ENCODE measurements at regions of chr2 and their contacts with region 1.

Region 1: DNA sequence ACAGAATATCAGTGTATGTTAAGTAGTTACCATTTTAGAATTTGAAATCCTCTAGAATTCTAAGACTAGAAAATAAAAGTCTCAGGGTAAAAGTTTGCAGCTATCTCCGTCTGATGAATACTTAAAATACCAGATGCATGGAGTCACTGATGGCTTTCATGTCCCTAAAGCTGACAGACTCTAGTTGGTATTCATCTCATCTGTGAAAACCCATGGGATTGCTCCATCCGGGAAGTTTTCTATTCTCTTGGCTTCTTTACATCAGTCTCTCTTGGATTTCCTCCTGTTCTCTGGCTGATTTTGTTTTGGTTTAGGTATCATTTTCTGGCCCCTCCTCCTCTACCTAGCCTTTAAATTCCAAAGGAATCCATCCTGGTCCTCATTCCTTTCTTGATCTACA is 465.6 kb upstream of the POU3F3 start:
- DNase-seq: no peak
- H3K4me3 ChIP-seq: no peak overlapping the region
- H3K27ac ChIP-seq: no peak overlapping the region
- H3K4me1 ChIP-seq: no peaks in the 10 kb centered on the region
- H3K27me3 ChIP-seq: peaks cover 0 to 3% (median 0%) of the 10 kb centered on the region in 4 donors
- CTCF ChIP-seq: no peak
- EP300 ChIP-seq: no peak
- POLR2A ChIP-seq: no peak

Region 2: DNA sequence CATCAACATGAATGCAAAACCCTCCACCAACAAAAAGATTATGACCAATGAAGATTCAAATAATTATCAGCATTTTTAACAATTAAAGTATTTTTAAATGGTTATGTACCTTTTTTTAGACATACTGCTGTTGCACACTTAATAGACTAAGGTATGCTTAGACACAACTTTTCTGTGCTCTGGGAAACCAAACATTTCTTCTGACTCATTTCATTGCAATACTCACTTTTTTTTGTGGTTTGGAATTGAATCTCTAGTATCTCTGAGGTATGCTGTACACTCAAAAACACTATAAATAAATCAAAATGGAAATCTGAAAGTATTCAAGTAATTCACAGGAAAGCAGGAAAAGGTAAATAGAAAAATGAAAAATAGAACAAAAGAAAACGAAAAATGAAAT is 217.8 kb after region 1 on chr2:
- intact Hi-C with region 1: no loop called
- DNase-seq: no peak
- H3K4me3 ChIP-seq: no peak overlapping the region
- H3K27ac ChIP-seq: no peak overlapping the region
- H3K4me1 ChIP-seq: no peaks in the 10 kb centered on the region
- H3K27me3 ChIP-seq: no peaks in the 10 kb centered on the region
- CTCF ChIP-seq: no peak
- EP300 ChIP-seq: no peak
- POLR2A ChIP-seq: no peak

Region 3: GRCh38 chr2:104678181-104678580 is 289.9 kb after region 1 on chr2:
- intact Hi-C with region 1: loop called (anchors 5 kb)
- DNase-seq: peak; percentile 80
- H3K4me3 ChIP-seq: no peak overlapping the region
- H3K27ac ChIP-seq: no peak overlapping the region
- H3K4me1 ChIP-seq: no peaks in the 10 kb centered on the region
- H3K27me3 ChIP-seq: no peaks in the 10 kb centered on the region
- CTCF ChIP-seq: no peak
- EP300 ChIP-seq: no peak
- POLR2A ChIP-seq: no peak

Region 4: GRCh38 chr2:104781151-104781550 is 392.9 kb after region 1 on chr2:
- intact Hi-C with region 1: no loop called
- DNase-seq: no peak
- H3K4me3 ChIP-seq: no peak overlapping the region
- H3K27ac ChIP-seq: no peak overlapping the region
- H3K4me1 ChIP-seq: no peaks in the 10 kb centered on the region
- H3K27me3 ChIP-seq: no peaks in the 10 kb centered on the region
- CTCF ChIP-seq: no peak
- EP300 ChIP-seq: no peak
- POLR2A ChIP-seq: no peak